H1 (cell line): ENCODE measurements at regions of chr16 and their contacts with region 1.

Region 1: DNA sequence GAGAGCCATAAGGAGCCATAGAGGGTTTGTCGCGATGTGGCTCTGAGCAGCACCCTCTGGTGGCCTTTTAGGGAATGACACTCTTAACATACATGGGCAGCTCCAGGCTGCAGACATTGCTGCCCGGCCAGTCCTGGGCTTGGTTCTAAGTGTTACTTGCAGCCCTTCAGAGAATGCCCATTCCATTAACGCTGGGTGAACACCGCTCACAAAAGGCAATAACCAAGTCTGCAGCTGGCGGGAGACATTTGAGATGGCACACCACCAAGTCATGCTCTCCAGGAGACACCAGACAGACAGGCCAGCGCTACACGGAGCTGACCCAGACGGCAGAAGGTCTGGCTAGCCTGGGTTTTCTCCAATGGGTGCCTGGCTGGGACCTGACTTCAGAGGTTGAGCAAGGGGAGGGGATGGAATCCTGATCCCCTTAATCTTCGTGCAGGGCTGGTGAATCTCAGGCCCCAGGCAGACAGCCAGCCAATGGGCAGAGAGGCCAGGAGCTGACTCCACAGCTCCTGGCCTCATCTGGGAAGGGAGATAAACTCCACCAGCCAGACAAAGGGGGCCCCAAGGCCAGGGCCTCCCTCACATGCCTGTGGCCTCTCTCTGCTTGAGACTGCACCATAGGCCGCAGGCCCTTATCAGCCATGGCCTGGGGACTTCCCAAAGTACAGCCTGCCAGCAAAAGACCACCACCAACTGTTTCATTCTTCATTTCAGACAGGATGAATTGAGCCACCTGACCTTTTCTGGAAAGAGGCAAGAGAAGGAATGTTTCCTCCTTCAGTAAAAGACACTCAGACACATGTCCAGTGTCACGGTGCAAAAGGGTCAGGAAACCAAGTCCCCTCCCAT is 58.8 kb downstream of the ZDHHC7 start:
- DNase-seq: peak; percentile 54 to 86
- H3K4me3 ChIP-seq: no peak overlapping the region
- H3K27ac ChIP-seq: no peak overlapping the region
- H3K4me1 ChIP-seq: no peaks in the 10 kb centered on the region
- H3K27me3 ChIP-seq: peaks cover 0 to 2% (median 0%) of the 10 kb centered on the region in 4 experiments; a peak in 1 of 7 replicates
- CTCF ChIP-seq: peak; percentile 79 to 94 (median 89)
- EP300 ChIP-seq: no peak
- POLR2A ChIP-seq: no peak
- RAD21 ChIP-seq: peak; percentile 78 to 84

Region 2: GRCh38 chr16:84773312-84773711 is 179.2 kb before region 1 on chr16:
- CTCF ChIA-PET with region 1: interaction called, 19 read pairs
- POLR2A ChIA-PET with region 1: no interaction called
- DNase-seq: no peak
- H3K4me3 ChIP-seq: no peak overlapping the region
- H3K27ac ChIP-seq: no peak overlapping the region
- H3K4me1 ChIP-seq: no peaks in the 10 kb centered on the region
- H3K27me3 ChIP-seq: no peaks in the 10 kb centered on the region
- CTCF ChIP-seq: peak in 1 of 3 experiments; percentile 11; a peak in 1 of 4 replicates
- EP300 ChIP-seq: no peak
- POLR2A ChIP-seq: no peak
- RAD21 ChIP-seq: peak in 1 of 2 experiments; percentile 36; a peak in 2 of 4 replicates

Region 3: DNA sequence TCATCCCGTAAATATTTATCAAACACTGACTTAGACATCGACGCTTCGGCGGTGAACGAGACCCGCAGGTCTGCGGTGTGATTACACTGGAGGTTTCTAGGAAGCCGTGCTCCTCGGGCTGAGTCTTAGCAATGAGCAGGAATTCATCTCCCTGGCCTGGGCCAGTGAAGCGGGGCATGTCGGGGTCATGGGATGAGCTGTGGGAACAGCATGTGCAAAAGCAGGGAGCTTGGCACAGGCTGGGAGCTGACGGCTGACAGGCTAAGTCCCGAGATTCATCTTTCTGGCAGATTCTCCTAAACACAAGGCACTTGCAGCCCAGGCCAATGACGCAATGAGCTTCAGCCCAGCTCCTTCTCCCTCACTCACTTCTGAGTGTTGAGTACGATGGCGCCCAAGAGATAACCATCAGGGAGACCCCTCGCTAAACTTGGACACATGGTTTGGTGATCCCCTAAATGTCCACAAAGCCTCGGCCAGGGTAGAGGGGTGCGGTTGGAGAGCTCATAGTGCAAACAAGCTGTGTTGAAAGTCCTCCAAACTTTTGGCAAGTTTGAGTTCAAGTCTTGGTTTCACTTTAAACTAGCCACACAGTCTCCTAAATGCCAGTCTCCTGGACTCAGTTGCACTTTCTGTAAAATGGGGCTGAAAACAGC is 119.9 kb before region 1 on chr16:
- CTCF ChIA-PET with region 1: interaction called, 11 read pairs
- POLR2A ChIA-PET with region 1: no interaction called
- DNase-seq: no peak
- H3K4me3 ChIP-seq: no peak overlapping the region
- H3K27ac ChIP-seq: no peak overlapping the region
- H3K4me1 ChIP-seq: peaks cover 0 to 7% (median 4%) of the 10 kb centered on the region in 4 experiments; a peak in 4 of 7 replicates
- H3K27me3 ChIP-seq: no peaks in the 10 kb centered on the region
- CTCF ChIP-seq: no peak
- EP300 ChIP-seq: no peak
- POLR2A ChIP-seq: no peak
- RAD21 ChIP-seq: no peak

Region 4: GRCh38 chr16:84914273-84914672 is 38.3 kb before region 1 on chr16:
- CTCF ChIA-PET with region 1: interaction called, 17 read pairs
- POLR2A ChIA-PET with region 1: no interaction called
- DNase-seq: no peak
- H3K4me3 ChIP-seq: no peak overlapping the region
- H3K27ac ChIP-seq: no peak overlapping the region
- H3K4me1 ChIP-seq: no peaks in the 10 kb centered on the region; a peak in 1 of 7 replicates
- H3K27me3 ChIP-seq: no peaks in the 10 kb centered on the region
- CTCF ChIP-seq: no peak
- EP300 ChIP-seq: no peak
- POLR2A ChIP-seq: no peak
- RAD21 ChIP-seq: no peak

Region 5: GRCh38 chr16:84933774-84934631 is 18.6 kb before region 1 on chr16:
- CTCF ChIA-PET with region 1: interaction called, 123 read pairs
- POLR2A ChIA-PET with region 1: no interaction called
- DNase-seq: no peak
- H3K4me3 ChIP-seq: no peak overlapping the region
- H3K27ac ChIP-seq: no peak overlapping the region
- H3K4me1 ChIP-seq: no peaks in the 10 kb centered on the region
- H3K27me3 ChIP-seq: no peaks in the 10 kb centered on the region
- CTCF ChIP-seq: no peak
- EP300 ChIP-seq: no peak
- POLR2A ChIP-seq: no peak
- RAD21 ChIP-seq: no peak

Region 6: GRCh38 chr16:84970447-84971127 is 18.0 kb after region 1 on chr16:
- CTCF ChIA-PET with region 1: interaction called, 169 read pairs
- POLR2A ChIA-PET with region 1: no interaction called
- DNase-seq: peak; percentile 67 to 91
- H3K4me3 ChIP-seq: no peak overlapping the region
- H3K27ac ChIP-seq: no peak overlapping the region
- H3K4me1 ChIP-seq: no peaks in the 10 kb centered on the region
- H3K27me3 ChIP-seq: no peaks in the 10 kb centered on the region; a peak in 1 of 7 replicates
- CTCF ChIP-seq: peak; percentile 86 to 96 (median 95)
- EP300 ChIP-seq: no peak
- POLR2A ChIP-seq: no peak
- RAD21 ChIP-seq: peak; percentile 96 to 97